Caco-2 (cell line): ENCODE measurements at regions of chr17 and their contacts with region 1.

Region 1: GRCh38 chr17:4789901-4790704 is 1.3 kb downstream of the GLTPD2 start:
- DNase-seq: peak; percentile 77 to 87
- H3K4me3 ChIP-seq: peak overlapping the region; percentile 70
- H3K4me3 Mint-ChIP-seq: peak overlapping the region; percentile 90
- H3K27ac Mint-ChIP-seq: peak overlapping the region; percentile 86
- H3K4me1 ChIP-seq: peaks cover 10% of the 10 kb centered on the region
- H3K4me1 Mint-ChIP-seq: peaks cover 6% of the 10 kb centered on the region
- H3K27me3 ChIP-seq: no peaks in the 10 kb centered on the region
- H3K27me3 Mint-ChIP-seq: no peaks in the 10 kb centered on the region
- CTCF ChIP-seq: peak; percentile 45 to 54

Region 2: GRCh38 chr17:4709794-4710692 is 80.1 kb before region 1 on chr17 and contains the start of gene ARRB2:
- CTCF ChIA-PET with region 1: interaction called, 19 read pairs
- POLR2A ChIA-PET with region 1: interaction called, 7 read pairs
- intact Hi-C with region 1: no loop called
- DNase-seq: peak; percentile 95 to 96
- H3K4me3 ChIP-seq: peak within 1 kb of the TSS; percentile 66
- H3K4me3 Mint-ChIP-seq: peak within 1 kb of the TSS; percentile 84
- H3K27ac Mint-ChIP-seq: peak within 1 kb of the TSS; percentile 83
- H3K4me1 ChIP-seq: no peaks in the 10 kb centered on the region; the same call in 1 of the 2 replicates
- H3K4me1 Mint-ChIP-seq: peaks cover 6% of the 10 kb centered on the region
- H3K27me3 ChIP-seq: no peaks in the 10 kb centered on the region
- H3K27me3 Mint-ChIP-seq: no peaks in the 10 kb centered on the region
- CTCF ChIP-seq: peak in 1 of 2 experiments; percentile 45
- total RNA-seq, gene ARRB2: 37.1 and 37.8 TPM in 2 replicates

Region 3: GRCh38 chr17:4733073-4733531 is 57.0 kb before region 1 on chr17:
- CTCF ChIA-PET with region 1: interaction called, 31 read pairs
- POLR2A ChIA-PET with region 1: interaction called, 7 read pairs
- intact Hi-C with region 1: loop called (anchors 1 kb)
- DNase-seq: no peak
- H3K4me3 ChIP-seq: no peak overlapping the region
- H3K4me3 Mint-ChIP-seq: no peak overlapping the region
- H3K27ac Mint-ChIP-seq: no peak overlapping the region
- H3K4me1 ChIP-seq: 0 out of 2 replicates have a peak, but pooled peaks cover 3% of the 10 kb centered on the region
- H3K4me1 Mint-ChIP-seq: peaks cover 14% of the 10 kb centered on the region
- H3K27me3 ChIP-seq: no peaks in the 10 kb centered on the region
- H3K27me3 Mint-ChIP-seq: no peaks in the 10 kb centered on the region
- CTCF ChIP-seq: peak in 1 of 2 experiments; percentile 16

Region 4: GRCh38 chr17:4739122-4740024 is 50.7 kb before region 1 on chr17 and contains the starts of genes CXCL16 and ZMYND15:
- CTCF ChIA-PET with region 1: interaction called, 13 read pairs
- POLR2A ChIA-PET with region 1: interaction called, 4 read pairs
- intact Hi-C with region 1: no loop called
- DNase-seq: peak; percentile 56 to 61
- H3K4me3 ChIP-seq: peak within 1 kb of the TSS; percentile 71
- H3K4me3 Mint-ChIP-seq: peak within 1 kb of the TSS; percentile 93
- H3K27ac Mint-ChIP-seq: peak within 1 kb of the TSS; percentile 90
- H3K4me1 ChIP-seq: no peaks in the 10 kb centered on the region
- H3K4me1 Mint-ChIP-seq: peaks cover 8% of the 10 kb centered on the region
- H3K27me3 ChIP-seq: no peaks in the 10 kb centered on the region
- H3K27me3 Mint-ChIP-seq: no peaks in the 10 kb centered on the region
- CTCF ChIP-seq: no peak
- total RNA-seq, gene CXCL16: 44.8 and 55.3 TPM in 2 replicates
- total RNA-seq, gene ZMYND15: 2.2 and 3.5 TPM in 2 replicates

Region 5: GRCh38 chr17:4759776-4760236 is 30.3 kb before region 1 on chr17:
- CTCF ChIA-PET with region 1: no interaction called
- POLR2A ChIA-PET with region 1: no interaction called
- intact Hi-C with region 1: no loop called
- DNase-seq: peak in 1 of 2 experiments; percentile 20
- H3K4me3 ChIP-seq: no peak overlapping the region
- H3K4me3 Mint-ChIP-seq: no peak overlapping the region
- H3K27ac Mint-ChIP-seq: no peak overlapping the region
- H3K4me1 ChIP-seq: no peaks in the 10 kb centered on the region
- H3K4me1 Mint-ChIP-seq: peaks cover 4% of the 10 kb centered on the region
- H3K27me3 ChIP-seq: no peaks in the 10 kb centered on the region
- H3K27me3 Mint-ChIP-seq: no peaks in the 10 kb centered on the region
- CTCF ChIP-seq: no peak

Region 6: GRCh38 chr17:4777969-4778761 is 11.9 kb before region 1 on chr17:
- CTCF ChIA-PET with region 1: interaction called, 29 read pairs
- POLR2A ChIA-PET with region 1: interaction called, 3 read pairs
- intact Hi-C with region 1: loop called (anchors 1 kb)
- DNase-seq: peak; percentile 75 to 82
- H3K4me3 ChIP-seq: no peak overlapping the region
- H3K4me3 Mint-ChIP-seq: peak overlapping the region; percentile 55
- H3K27ac Mint-ChIP-seq: peak overlapping the region; percentile 94
- H3K4me1 ChIP-seq: peaks cover 31% of the 10 kb centered on the region
- H3K4me1 Mint-ChIP-seq: peaks cover 14% of the 10 kb centered on the region
- H3K27me3 ChIP-seq: no peaks in the 10 kb centered on the region
- H3K27me3 Mint-ChIP-seq: no peaks in the 10 kb centered on the region
- CTCF ChIP-seq: no peak

Region 7: DNA sequence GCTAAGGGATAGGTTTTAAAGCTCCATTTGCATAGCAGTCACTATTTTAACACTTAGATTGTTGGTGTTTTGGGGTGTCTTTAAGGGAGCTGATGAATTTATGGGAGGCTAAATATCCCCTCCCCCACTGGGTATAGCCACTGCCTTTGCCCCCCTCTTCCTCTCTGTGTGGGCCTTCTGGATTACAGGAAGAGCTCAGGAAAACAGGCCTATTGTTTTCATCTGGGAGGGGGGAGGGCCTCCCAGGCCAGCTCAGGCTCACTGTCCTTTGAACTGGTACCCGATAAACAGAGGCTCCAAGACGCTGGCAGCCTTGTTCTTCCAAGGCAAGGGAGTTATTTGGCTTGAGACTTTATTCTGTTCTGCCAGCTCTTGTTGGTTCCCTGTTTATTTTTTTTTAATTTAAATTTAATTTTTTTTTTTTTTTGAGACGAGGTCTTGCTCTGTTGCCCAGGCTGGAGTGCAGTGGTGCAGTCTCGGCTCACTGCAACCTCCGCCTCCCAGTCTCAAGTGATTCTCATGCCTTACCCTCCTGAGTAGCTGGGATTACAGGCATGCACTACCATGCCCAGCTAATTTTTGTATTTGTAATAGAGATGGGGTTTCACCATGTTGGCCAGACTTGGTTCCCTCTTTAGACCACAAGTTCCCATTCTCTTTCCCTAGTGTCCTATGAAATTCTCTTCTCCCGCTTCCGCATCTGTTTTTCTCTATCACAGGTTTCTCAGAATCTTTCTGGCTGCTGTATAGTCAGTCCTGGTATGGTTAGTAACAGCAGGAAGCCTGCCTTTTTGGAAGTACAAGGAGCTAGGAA is 68.2 kb after region 1 on chr17:
- CTCF ChIA-PET with region 1: interaction called, 10 read pairs
- POLR2A ChIA-PET with region 1: no interaction called
- intact Hi-C with region 1: no loop called
- DNase-seq: no peak
- H3K4me3 ChIP-seq: no peak overlapping the region
- H3K4me3 Mint-ChIP-seq: no peak overlapping the region
- H3K27ac Mint-ChIP-seq: no peak overlapping the region
- H3K4me1 ChIP-seq: peaks cover 14% of the 10 kb centered on the region
- H3K4me1 Mint-ChIP-seq: peaks cover 19% of the 10 kb centered on the region
- H3K27me3 ChIP-seq: no peaks in the 10 kb centered on the region
- H3K27me3 Mint-ChIP-seq: no peaks in the 10 kb centered on the region
- CTCF ChIP-seq: no peak

Region 8: DNA sequence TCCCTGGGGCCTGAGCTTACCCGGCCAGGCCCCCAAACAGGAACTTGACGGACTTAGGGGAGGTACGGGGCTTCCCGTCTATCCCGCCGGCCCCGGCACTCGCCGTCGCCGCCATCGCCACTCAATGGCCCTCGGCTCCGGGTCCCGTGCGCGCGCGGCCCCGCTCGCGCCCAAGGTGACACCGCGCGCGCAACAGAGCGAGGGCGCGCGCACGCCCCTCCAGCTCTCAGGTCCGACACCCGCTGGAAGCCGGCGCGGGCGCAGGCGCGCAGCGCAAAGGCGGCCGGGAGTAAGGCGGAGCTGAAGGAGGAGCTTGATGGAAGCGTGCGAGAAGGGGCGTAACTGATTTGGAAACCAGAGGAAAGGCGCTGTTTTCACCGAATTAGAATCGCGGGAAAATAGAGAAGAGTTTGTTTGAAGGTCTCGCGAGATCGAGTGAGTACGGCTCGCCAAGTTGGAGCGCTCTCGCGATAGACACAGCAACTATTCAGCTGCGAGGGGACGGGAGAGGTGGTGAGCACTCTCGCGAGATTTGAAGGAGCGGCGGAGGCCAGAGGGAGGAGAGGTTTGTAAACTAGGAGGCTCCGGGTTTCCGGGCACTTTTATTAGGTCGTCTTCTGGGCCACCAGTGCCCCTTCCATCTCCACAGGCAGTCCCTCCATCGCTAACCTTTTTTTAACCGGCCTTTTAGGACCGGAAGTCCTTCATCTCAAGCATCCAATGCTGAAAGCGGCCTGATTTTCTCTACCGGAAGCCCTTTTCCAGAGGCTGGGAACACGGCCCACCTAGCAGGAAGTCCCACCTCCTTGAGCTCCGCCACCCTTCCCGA is 149.9 kb after region 1 on chr17 and contains the starts of genes RNF167 and SLC25A11:
- CTCF ChIA-PET with region 1: no interaction called
- POLR2A ChIA-PET with region 1: no interaction called
- intact Hi-C with region 1: no loop called
- DNase-seq: peak; percentile 91 to 94
- H3K4me3 ChIP-seq: peak within 1 kb of the TSS; percentile 73
- H3K4me3 Mint-ChIP-seq: peak within 1 kb of the TSS; percentile 87
- H3K27ac Mint-ChIP-seq: peak within 1 kb of the TSS; percentile 89
- H3K4me1 ChIP-seq: no peaks in the 10 kb centered on the region
- H3K4me1 Mint-ChIP-seq: peaks cover 5% of the 10 kb centered on the region
- H3K27me3 ChIP-seq: no peaks in the 10 kb centered on the region
- H3K27me3 Mint-ChIP-seq: no peaks in the 10 kb centered on the region
- CTCF ChIP-seq: no peak
- total RNA-seq, gene RNF167: 55.1 and 60.9 TPM in 2 replicates
- total RNA-seq, gene SLC25A11: 36.5 and 40.1 TPM in 2 replicates